ENCODE measurements at regions of chr21 and their contacts with region 1.

Region 1: DNA sequence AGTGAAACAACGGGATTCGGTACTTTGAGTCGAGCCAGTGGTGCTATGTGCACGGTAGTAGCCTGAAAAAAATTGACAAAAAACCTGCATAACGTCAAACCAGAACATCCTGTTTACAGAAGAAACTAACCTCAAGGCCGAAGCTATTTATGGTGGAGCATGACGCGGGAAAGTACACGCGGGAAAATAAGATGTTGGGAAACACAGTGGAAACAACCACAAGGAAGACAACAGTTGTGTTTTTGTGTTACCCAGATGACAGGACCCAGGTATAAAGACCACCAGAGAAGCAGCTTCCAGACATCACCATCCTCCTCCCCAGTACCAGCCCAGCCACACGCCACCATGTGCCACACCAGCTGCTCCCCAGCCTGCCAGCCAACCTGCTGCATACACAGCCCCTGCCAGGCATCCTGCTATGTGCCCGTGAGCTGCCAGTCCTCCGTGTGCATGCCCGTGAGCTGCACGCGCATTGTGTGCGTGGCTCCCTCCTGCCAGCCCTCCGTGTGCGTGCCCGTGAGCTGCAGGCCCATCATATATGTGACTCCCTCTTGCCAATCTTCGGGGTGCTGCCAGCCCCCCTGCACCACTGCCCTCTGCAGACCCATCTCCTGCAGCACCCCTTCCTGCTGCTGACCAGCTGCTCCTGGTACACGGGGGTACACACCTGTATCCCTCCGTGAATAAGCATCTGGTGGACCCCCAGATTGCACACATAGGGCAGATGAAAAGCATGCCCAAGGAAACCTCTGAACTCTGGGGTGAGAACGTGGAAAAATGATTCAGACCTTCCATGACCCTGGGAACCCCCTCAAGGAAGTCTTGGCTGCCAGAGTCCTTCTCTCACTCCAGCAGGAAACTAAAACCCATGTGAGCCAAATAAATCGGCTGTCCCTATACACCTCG is at the start of gene KRTAP12-3:
- DNase-seq: peak; percentile 7
- ATAC-seq: no peak
- H3K4me3 ChIP-seq: no peak within 1 kb of the TSS
- H3K27ac ChIP-seq: no peak within 1 kb of the TSS
- H3K4me1 ChIP-seq: no peaks in the 10 kb centered on the region
- H3K27me3 ChIP-seq: peaks cover 2% of the 10 kb centered on the region; the same call in 1 of the 2 replicates
- CTCF ChIP-seq: no peak
- POLR2A ChIP-seq: no peak
- RAD21 ChIP-seq: no peak
- total RNA-seq, gene KRTAP12-3: not detected in 2 replicates

Region 2: DNA sequence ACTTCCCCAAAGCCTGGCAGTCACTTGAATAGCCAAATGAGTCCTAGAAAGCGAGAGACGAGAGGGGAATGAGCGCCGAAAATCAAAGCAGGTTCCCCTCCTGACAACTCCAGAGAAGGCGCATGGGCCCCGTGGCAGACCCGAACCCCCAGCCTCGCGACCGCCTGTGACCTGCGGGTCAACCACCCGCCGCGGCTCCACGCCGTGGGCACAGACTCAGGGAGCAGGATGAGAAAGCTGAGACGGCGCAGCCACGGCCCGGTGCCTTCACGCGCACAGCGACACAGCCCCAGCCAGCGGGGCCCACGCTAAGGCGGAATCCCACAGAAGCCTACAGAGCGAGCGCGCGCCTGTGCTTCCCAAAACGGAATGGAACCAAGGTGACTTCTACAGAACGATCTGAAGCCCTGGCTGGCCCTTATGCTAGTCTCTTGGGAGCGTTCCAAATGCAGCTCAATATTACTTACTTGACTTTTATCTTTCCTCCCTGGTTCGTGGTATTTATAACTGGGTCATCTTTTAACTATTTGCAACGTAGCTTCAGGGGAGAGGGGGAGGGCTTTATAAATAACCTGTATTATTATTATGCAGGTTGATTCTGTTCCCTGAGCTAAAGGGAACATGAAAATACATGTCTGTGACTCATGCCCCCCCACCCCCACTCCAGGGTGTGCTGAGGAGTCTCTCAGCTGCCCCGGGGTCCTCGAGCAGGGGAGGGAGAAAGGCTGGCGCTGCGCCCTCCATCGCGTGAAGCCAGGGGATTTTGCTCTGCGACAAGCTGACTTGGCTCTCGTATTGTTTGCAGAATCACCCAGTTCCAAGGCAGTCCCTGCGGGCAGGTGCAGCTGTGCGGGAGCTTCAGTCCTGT is 51.8 kb after region 1 on chr21:
- CTCF ChIA-PET with region 1: no interaction called
- POLR2A ChIA-PET with region 1: no interaction called
- dilution Hi-C with region 1: no loop called
- in situ Hi-C with region 1: no loop called
- intact Hi-C with region 1: loop called (anchors 10 kb)
- DNase-seq: peak; percentile 0
- ATAC-seq: peak; percentile 46; the same call in 1 of the 2 replicates
- H3K4me3 ChIP-seq: no peak overlapping the region
- H3K27ac ChIP-seq: no peak overlapping the region
- H3K4me1 ChIP-seq: peaks cover 1% of the 10 kb centered on the region; the same call in 1 of the 2 replicates
- H3K27me3 ChIP-seq: peaks cover 79% of the 10 kb centered on the region
- CTCF ChIP-seq: no peak
- POLR2A ChIP-seq: no peak
- RAD21 ChIP-seq: no peak

Region 3: DNA sequence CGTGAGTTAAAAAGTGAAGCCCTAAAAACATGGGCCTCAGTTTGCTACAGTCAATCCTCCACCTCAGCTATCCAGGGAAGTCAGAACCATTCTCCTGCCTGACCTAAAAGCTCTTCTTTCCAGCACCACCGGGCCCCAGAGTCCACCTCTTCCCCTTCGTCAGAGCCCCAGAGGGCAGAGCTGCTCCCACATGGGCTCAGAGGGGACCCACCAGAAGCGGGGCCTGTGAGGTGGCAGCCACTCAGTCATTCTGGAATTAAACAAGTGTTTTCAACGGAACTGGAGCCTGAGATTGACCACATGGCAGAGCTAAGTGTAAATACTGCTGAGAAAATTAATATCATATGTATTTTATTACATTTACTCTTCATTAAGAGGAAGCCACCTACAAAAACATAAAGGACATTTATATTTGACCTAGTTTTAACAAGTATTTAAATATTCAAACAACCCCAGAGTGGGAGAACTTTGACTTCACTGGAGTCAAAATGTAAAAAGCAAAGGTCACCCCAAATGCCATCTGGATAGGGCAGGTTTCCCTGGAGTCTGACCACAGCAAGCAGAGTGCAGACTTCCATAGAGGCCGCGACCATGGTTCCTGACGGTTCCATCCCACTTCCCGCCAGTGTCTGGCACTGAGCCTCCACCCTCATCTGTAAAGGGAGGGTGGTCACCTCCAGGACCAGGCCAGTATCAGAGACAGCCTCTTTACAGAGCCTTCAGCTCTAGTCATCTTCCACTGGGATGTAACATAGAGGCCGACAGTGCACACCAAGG is 158.2 kb after region 1 on chr21:
- CTCF ChIA-PET with region 1: no interaction called
- POLR2A ChIA-PET with region 1: no interaction called
- dilution Hi-C with region 1: no loop called
- in situ Hi-C with region 1: no loop called
- intact Hi-C with region 1: no loop called
- DNase-seq: no peak
- ATAC-seq: no peak
- H3K4me3 ChIP-seq: no peak overlapping the region
- H3K27ac ChIP-seq: no peak overlapping the region
- H3K4me1 ChIP-seq: peaks cover 8% of the 10 kb centered on the region; the same call in 1 of the 2 replicates
- H3K27me3 ChIP-seq: no peaks in the 10 kb centered on the region
- CTCF ChIP-seq: no peak
- POLR2A ChIP-seq: no peak
- RAD21 ChIP-seq: no peak

Region 4: DNA sequence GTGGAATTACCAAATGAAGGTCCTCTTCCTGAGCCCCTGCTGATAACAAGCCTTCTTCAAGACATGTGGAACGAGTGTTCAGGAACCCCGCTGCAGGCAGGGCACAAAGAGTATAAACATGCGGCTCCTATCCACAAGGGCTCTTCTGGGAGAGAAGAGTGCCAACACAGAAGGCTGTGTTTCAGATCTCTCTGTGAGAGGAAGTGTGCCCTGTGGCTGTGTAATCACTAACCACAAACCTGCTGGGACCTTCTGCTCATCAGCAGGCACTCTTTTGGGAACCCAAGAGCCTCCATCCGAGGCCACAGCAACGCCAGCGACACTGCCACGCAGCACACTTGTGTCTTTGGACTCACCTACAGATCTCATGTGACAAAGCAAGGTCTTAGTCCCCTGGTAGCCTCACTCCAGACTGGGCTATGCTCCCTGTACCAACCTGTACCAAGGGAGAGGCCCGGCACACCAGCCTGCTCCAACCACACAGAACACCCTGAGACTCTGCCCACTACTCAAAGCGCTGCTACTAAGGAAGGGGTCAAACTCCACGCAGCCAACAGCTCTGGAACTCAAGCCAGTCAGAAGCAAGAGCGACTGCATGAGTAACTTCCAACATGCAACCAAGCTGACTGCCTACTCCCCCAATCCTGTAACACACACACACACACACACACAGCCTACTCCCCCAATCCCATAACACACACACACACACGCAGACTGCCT is 207.8 kb after region 1 on chr21:
- CTCF ChIA-PET with region 1: no interaction called
- POLR2A ChIA-PET with region 1: no interaction called
- dilution Hi-C with region 1: no loop called
- in situ Hi-C with region 1: no loop called
- intact Hi-C with region 1: no loop called
- DNase-seq: no peak
- ATAC-seq: no peak
- H3K4me3 ChIP-seq: no peak overlapping the region
- H3K27ac ChIP-seq: no peak overlapping the region
- H3K4me1 ChIP-seq: peaks cover 32% of the 10 kb centered on the region
- H3K27me3 ChIP-seq: no peaks in the 10 kb centered on the region
- CTCF ChIP-seq: no peak
- POLR2A ChIP-seq: no peak
- RAD21 ChIP-seq: no peak